SK-N-SH (cell line): ENCODE measurements at regions of chr7 and their contacts with region 1.

Region 1: GRCh38 chr7:1065263-1066260 is 21.2 kb downstream of the GPR146 start:
- DNase-seq: peak; percentile 99
- H3K4me3 ChIP-seq: no peak overlapping the region; a peak in 1 of 4 replicates
- H3K27ac ChIP-seq: no peak overlapping the region
- H3K4me1 ChIP-seq: peaks cover 0 to 9% of the 10 kb centered on the region in 2 experiments; a peak in 1 of 4 replicates
- H3K27me3 ChIP-seq: no peaks in the 10 kb centered on the region
- CTCF ChIP-seq: peak; percentile 87
- EP300 ChIP-seq: no peak
- RAD21 ChIP-seq: peak; percentile 93

Region 2: GRCh38 chr7:897771-898376 is 167.7 kb before region 1 on chr7:
- CTCF ChIA-PET with region 1: no interaction called
- POLR2A ChIA-PET with region 1: no interaction called
- DNase-seq: peak; percentile 85
- H3K4me3 ChIP-seq: no peak overlapping the region
- H3K27ac ChIP-seq: no peak overlapping the region
- H3K4me1 ChIP-seq: peaks cover 4 to 17% of the 10 kb centered on the region in 2 experiments; a peak in 2 of 4 replicates
- H3K27me3 ChIP-seq: no peaks in the 10 kb centered on the region
- CTCF ChIP-seq: no peak
- EP300 ChIP-seq: no peak
- RAD21 ChIP-seq: no peak

Region 3: GRCh38 chr7:974820-975681 is 90.5 kb before region 1 on chr7 and contains the start of gene COX19:
- CTCF ChIA-PET with region 1: interaction called, 16 read pairs
- POLR2A ChIA-PET with region 1: no interaction called
- DNase-seq: peak; percentile 100
- H3K4me3 ChIP-seq: peak within 1 kb of the TSS; percentile 75 to 83
- H3K27ac ChIP-seq: peak within 1 kb of the TSS; percentile 79 to 91
- H3K4me1 ChIP-seq: peaks cover 6 to 12% of the 10 kb centered on the region in 2 experiments; a peak in 2 of 4 replicates
- H3K27me3 ChIP-seq: no peaks in the 10 kb centered on the region
- CTCF ChIP-seq: no peak
- EP300 ChIP-seq: no peak
- RAD21 ChIP-seq: no peak
- polyA plus RNA-seq, gene COX19: 7.6 TPM in 2 replicates

Region 4: GRCh38 chr7:1020849-1021251 is 44.7 kb before region 1 on chr7:
- CTCF ChIA-PET with region 1: interaction called, 46 read pairs
- POLR2A ChIA-PET with region 1: no interaction called
- DNase-seq: no peak
- H3K4me3 ChIP-seq: no peak overlapping the region
- H3K27ac ChIP-seq: no peak overlapping the region
- H3K4me1 ChIP-seq: no peaks in the 10 kb centered on the region; a peak in 1 of 4 replicates
- H3K27me3 ChIP-seq: no peaks in the 10 kb centered on the region
- CTCF ChIP-seq: peak; percentile 35
- EP300 ChIP-seq: no peak
- RAD21 ChIP-seq: no peak

Region 5: GRCh38 chr7:1076181-1077072 is 10.9 kb after region 1 on chr7:
- CTCF ChIA-PET with region 1: interaction called, 58 read pairs
- POLR2A ChIA-PET with region 1: no interaction called
- DNase-seq: no peak
- H3K4me3 ChIP-seq: no peak overlapping the region
- H3K27ac ChIP-seq: no peak overlapping the region
- H3K4me1 ChIP-seq: peaks cover 0 to 12% of the 10 kb centered on the region in 2 experiments; a peak in 1 of 4 replicates
- H3K27me3 ChIP-seq: no peaks in the 10 kb centered on the region
- CTCF ChIP-seq: no peak
- EP300 ChIP-seq: no peak
- RAD21 ChIP-seq: no peak

Region 6: DNA sequence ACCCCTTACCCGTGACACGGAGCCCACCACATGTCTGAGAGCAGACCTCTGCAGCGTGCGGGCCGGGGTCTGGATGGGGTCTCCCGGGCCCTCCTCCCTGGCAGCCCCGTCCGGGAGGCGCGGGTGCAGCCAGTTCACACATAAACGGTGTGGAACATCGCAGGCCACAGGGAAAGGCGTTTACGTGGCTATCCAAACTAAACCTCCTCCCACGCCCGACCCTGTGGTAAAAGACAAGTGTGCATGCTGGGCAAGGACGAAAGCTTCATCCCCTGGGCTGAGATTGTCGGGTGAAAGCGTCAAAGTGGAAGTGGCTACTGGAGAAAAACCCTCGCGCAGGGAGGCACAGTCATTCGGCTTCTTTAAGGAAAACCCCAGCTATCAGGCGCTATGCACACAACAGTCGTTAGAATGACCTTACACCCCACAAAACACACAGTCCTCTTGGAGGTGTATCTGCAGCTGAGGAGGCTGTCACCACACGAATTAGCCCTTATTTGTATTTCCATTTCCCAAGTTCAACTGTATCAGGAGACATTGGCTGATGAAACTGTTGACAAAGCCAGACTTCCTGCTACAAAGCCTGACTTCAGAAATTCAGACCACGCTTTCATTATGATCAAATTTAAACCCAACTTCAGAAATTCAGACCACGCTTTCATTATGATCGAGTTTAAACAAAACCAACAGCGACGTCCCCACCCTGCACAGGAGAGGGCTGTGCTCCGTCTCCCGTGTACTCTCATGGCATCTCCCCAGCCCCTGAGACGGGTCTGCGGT is 37.6 kb after region 1 on chr7:
- CTCF ChIA-PET with region 1: interaction called, 11 read pairs
- POLR2A ChIA-PET with region 1: no interaction called
- DNase-seq: no peak
- H3K4me3 ChIP-seq: no peak overlapping the region
- H3K27ac ChIP-seq: no peak overlapping the region
- H3K4me1 ChIP-seq: peaks cover 6 to 22% of the 10 kb centered on the region in 2 experiments; a peak in 2 of 4 replicates
- H3K27me3 ChIP-seq: no peaks in the 10 kb centered on the region
- CTCF ChIP-seq: no peak
- EP300 ChIP-seq: no peak
- RAD21 ChIP-seq: no peak

Region 7: GRCh38 chr7:1151653-1152425 is 86.3 kb after region 1 on chr7:
- CTCF ChIA-PET with region 1: interaction called, 15 read pairs
- POLR2A ChIA-PET with region 1: interaction called, 4 read pairs
- DNase-seq: no peak
- H3K4me3 ChIP-seq: no peak overlapping the region
- H3K27ac ChIP-seq: no peak overlapping the region
- H3K4me1 ChIP-seq: peaks cover 0 to 4% of the 10 kb centered on the region in 2 experiments; a peak in 2 of 4 replicates
- H3K27me3 ChIP-seq: no peaks in the 10 kb centered on the region
- CTCF ChIP-seq: no peak
- EP300 ChIP-seq: no peak
- RAD21 ChIP-seq: no peak